ENCODE measurements at regions of chr18 and their contacts with region 1.

Region 1: GRCh38 chr18:45839414-45840395 is 14.2 kb downstream of the SIGLEC15 start:
- DNase-seq: peak; percentile 58
- ATAC-seq: peak; percentile 43
- H3K4me3 Mint-ChIP-seq: no peak overlapping the region
- H3K27ac Mint-ChIP-seq: no peak overlapping the region
- H3K4me1 Mint-ChIP-seq: peaks cover 10% of the 10 kb centered on the region
- H3K27me3 Mint-ChIP-seq: peaks cover 41% of the 10 kb centered on the region

Region 2: DNA sequence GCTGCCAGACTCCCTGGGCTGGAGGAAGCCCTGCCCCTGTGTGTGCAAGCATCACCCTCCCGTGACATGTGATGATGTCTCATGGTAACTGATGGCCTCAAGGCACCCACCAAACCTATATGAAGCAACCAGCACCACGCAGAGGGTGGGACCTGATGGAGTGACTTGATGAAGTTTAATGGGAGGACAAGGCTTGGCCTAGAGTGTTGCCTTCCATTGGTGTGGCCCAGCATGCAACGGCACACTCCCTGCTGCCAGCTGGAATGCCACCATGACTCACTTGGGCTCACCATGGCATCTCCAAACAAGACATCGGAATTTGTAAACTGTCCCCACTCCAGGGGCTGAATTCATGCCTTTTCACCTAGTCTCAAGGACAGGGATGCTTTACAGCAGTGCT is 124.4 kb before region 1 on chr18:
- CTCF ChIA-PET with region 1: no interaction called
- POLR2A ChIA-PET with region 1: no interaction called
- DNase-seq: no peak
- ATAC-seq: no peak
- H3K4me3 Mint-ChIP-seq: no peak overlapping the region
- H3K27ac Mint-ChIP-seq: no peak overlapping the region
- H3K4me1 Mint-ChIP-seq: peaks cover 3% of the 10 kb centered on the region
- H3K27me3 Mint-ChIP-seq: peaks cover 2% of the 10 kb centered on the region

Region 3: DNA sequence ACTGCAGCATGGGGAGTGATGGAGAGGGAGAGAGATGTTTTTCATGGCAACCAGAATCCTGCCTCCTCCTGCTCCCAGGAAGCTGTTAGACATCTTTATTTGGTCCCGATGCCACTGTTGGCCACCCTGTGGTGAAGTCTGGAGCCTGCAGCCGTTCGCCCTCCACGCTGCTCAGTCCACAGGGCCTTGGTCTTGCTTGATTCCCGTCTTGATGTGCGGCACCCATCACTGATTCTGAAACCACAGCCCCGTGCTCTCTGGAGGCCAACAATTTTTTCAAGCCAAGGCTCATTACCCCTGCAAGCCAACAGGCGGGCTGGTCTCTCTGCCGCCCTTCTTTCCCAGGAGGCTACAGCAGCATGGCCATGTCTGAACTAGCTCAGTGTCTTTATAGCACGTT is 10.3 kb after region 1 on chr18:
- CTCF ChIA-PET with region 1: interaction called, 12 read pairs
- POLR2A ChIA-PET with region 1: no interaction called
- DNase-seq: no peak
- ATAC-seq: no peak
- H3K4me3 Mint-ChIP-seq: no peak overlapping the region
- H3K27ac Mint-ChIP-seq: no peak overlapping the region
- H3K4me1 Mint-ChIP-seq: peaks cover 3% of the 10 kb centered on the region
- H3K27me3 Mint-ChIP-seq: no peaks in the 10 kb centered on the region

Measured in activated CD8-positive, alpha-beta T cell treated with anti-CD3 and anti-CD28 coated beads, Interleukin-2, amount 10 ng/mL, durations not matched to agents 7 days and 5 days (primary cell).